A673 (cell line): ENCODE measurements at regions of chr20 and their contacts with region 1.

Region 1: DNA sequence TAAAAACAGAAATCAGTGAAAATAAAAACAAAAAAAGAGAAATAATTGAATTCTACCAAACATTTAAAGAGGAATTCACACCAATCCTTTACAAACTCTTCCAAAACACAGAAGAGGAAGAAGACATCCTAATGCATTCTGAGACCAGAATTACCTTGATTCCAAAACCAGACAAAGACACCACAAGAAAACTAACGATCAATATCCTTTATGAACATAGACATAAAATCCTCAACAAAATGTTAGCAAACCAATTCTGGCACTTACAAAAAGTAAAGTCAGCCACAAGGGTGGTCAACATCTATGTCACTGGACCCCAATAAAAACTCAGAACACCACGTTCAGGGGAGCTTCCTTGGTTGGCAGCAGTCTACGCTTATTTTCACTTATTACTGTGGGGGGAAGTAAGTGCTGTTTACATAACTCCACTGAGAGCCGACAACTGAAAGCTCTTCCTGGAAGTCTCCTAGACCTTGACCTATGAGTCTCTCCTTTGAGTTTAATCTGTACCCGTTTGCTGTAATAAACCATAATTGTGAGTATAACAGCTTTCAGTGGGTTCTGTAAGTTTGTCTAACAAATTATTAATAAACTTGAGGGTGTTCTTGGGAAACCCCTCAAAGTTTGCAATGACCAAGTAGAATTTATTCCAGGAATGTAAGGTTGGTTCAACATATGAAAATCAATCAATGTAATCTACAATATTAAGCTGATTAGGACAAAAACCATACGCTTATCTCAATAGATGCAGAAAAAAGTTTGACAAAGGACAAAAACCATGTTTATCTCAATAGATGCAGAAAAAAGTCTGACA is 24.5 kb downstream of the GZF1 start:
- DNase-seq: no peak
- H3K4me3 ChIP-seq: no peak overlapping the region
- H3K27ac ChIP-seq: no peak overlapping the region
- H3K4me1 ChIP-seq: no peaks in the 10 kb centered on the region
- H3K27me3 ChIP-seq: no peaks in the 10 kb centered on the region
- CTCF ChIP-seq: no peak

Region 2: DNA sequence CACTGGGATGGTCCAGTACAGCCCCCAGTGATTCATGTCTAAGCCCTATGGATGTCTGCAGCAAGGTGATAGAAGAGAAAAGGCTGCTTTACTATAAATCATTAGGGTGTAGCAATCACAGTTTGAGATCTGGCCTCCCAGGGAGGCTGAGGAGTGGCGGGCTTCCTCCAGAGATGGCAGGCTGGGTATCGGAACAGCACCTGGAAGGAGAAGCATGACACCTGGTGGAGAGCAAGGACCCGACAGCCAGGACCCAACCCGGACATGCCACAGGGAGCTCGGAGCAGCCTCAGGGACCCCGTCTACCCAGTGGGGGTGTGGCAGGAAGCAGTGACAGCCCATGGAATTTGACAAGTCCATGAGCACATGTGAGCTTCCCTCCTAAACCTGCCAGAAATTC is 185.6 kb before region 1 on chr20:
- CTCF ChIA-PET with region 1: no interaction called
- POLR2A ChIA-PET with region 1: no interaction called
- intact Hi-C with region 1: no loop called
- DNase-seq: peak; percentile 24
- H3K4me3 ChIP-seq: no peak overlapping the region
- H3K27ac ChIP-seq: no peak overlapping the region
- H3K4me1 ChIP-seq: no peaks in the 10 kb centered on the region
- H3K27me3 ChIP-seq: peaks cover 91% of the 10 kb centered on the region
- CTCF ChIP-seq: 0 out of 2 replicates have a peak, but pooled peaks have one; percentile 14

Region 3: GRCh38 chr20:25207960-25208534 is 1821.5 kb after region 1 on chr20:
- CTCF ChIA-PET with region 1: no interaction called
- POLR2A ChIA-PET with region 1: interaction called, 23 read pairs
- intact Hi-C with region 1: no loop called
- DNase-seq: no peak
- H3K4me3 ChIP-seq: no peak overlapping the region
- H3K27ac ChIP-seq: no peak overlapping the region
- H3K4me1 ChIP-seq: peaks cover 7% of the 10 kb centered on the region
- H3K27me3 ChIP-seq: no peaks in the 10 kb centered on the region
- CTCF ChIP-seq: no peak